IMR-90 (cell line): ENCODE measurements at regions of chr6 and their contacts with region 1.

Region 1: DNA sequence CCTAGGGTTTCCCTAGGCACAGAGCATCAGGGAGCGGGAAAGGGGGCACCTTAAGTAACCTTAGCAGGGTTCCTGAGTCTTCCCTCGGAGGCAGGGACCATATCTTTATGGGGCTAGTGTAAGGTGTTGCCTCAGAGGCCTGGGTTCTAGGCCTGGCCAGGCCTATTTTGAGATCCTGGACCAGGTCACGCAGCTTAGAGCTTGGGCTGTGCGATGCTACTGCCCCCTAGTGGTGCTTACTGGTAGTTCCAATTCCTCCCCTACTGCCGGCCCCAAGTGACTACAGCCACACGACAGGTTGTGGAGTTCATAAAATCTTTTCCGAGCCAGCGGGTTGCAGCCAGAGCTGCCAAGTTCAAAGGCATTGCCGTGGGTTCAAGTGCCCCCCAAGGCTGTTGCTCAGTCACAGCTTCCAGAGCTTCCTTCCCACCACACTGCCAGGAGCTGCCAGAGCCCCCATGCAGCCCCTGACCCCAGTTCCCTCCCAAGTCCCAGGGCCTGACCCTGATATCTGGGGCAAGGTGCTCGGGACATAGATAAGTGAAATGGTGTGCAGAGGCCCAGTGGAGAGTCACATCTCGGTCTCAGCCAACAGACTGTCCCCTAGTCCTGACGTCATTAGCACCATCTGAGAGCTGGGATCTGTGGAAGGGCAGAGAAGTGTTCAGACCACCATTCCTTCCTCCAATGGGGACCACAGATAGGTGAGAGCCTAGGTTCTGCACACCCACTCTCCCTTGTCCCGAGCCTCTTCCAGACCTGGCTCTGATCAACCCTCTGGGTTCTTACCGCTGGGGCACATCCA is 3.3 kb downstream of the LRRC73 start:
- DNase-seq: peak; percentile 78
- ATAC-seq: peak; percentile 58
- H3K4me3 ChIP-seq: no peak overlapping the region
- H3K27ac ChIP-seq: no peak overlapping the region
- H3K4me1 ChIP-seq: peaks cover 4% of the 10 kb centered on the region
- H3K27me3 ChIP-seq: no peaks in the 10 kb centered on the region
- CTCF ChIP-seq: peak; percentile 98
- POLR2A ChIP-seq: 0 out of 2 replicates have a peak, but pooled peaks have one; percentile 30
- RAD21 ChIP-seq: peak; percentile 94

Region 2: GRCh38 chr6:43150051-43150751 is 356.7 kb before region 1 on chr6:
- CTCF ChIA-PET with region 1: no interaction called
- POLR2A ChIA-PET with region 1: no interaction called
- dilution Hi-C with region 1: no loop called
- in situ Hi-C with region 1: no loop called
- intact Hi-C with region 1: no loop called
- DNase-seq: peak; percentile 16
- ATAC-seq: no peak
- H3K4me3 ChIP-seq: no peak overlapping the region
- H3K27ac ChIP-seq: no peak overlapping the region
- H3K4me1 ChIP-seq: peaks cover 1% of the 10 kb centered on the region; the same call in 1 of the 2 replicates
- H3K27me3 ChIP-seq: no peaks in the 10 kb centered on the region
- CTCF ChIP-seq: no peak
- POLR2A ChIP-seq: no peak
- RAD21 ChIP-seq: no peak

Region 3: DNA sequence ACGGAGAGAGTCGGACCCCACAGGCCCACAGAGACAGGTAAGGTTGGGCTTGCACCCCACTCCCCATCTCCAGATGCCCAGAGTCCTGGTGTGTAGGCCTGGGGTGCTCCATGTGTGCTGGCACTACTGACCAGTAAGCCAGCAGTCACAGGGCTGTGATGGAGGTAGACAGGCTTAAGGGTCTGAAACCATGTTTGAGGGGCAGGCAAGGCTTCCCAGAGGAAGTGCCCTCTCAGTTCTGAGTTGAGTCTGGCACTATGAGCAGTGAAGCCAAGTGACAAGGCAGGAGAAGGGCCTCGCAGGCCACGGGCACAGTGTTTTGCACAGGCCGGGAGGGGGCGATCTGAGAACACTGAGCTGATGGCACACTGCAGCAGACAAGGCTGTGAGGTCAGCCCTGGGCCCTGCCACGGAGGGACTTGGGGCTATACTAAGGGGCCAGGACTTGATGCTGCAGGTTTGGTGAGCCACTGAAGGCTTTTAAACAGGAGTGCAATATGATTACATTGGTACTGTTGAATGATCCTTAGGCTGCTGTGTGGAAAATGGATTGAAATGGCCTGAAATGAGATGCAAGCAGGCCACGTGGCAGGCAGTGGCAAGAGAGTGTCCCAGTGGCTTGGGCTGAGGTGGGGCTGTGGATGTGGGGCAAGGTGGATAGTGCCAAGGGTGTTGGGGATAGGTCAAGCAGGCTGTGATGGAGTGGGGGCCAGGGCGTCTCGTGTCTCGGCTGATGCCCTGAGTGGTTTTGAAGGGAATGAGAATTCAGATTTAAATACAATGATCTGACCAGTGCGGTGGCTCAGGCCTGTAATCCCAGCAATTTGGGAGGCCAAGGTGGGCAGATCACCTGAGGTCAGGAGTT is 243.3 kb before region 1 on chr6:
- CTCF ChIA-PET with region 1: no interaction called
- POLR2A ChIA-PET with region 1: no interaction called
- dilution Hi-C with region 1: no loop called
- in situ Hi-C with region 1: no loop called
- intact Hi-C with region 1: loop called (anchors 1 kb)
- DNase-seq: peak; percentile 62
- ATAC-seq: peak; percentile 99
- H3K4me3 ChIP-seq: no peak overlapping the region
- H3K27ac ChIP-seq: no peak overlapping the region
- H3K4me1 ChIP-seq: no peaks in the 10 kb centered on the region
- H3K27me3 ChIP-seq: peaks cover 35% of the 10 kb centered on the region
- CTCF ChIP-seq: peak; percentile 90
- POLR2A ChIP-seq: no peak
- RAD21 ChIP-seq: peak; percentile 94

Region 4: GRCh38 chr6:43386492-43386891 is 120.4 kb before region 1 on chr6:
- CTCF ChIA-PET with region 1: no interaction called
- POLR2A ChIA-PET with region 1: no interaction called
- dilution Hi-C with region 1: no loop called
- in situ Hi-C with region 1: no loop called
- intact Hi-C with region 1: loop called (anchors 1 kb)
- DNase-seq: peak; percentile 25
- ATAC-seq: peak; percentile 76
- H3K4me3 ChIP-seq: no peak overlapping the region
- H3K27ac ChIP-seq: no peak overlapping the region
- H3K4me1 ChIP-seq: peaks cover 2% of the 10 kb centered on the region
- H3K27me3 ChIP-seq: peaks cover 18% of the 10 kb centered on the region
- CTCF ChIP-seq: peak; percentile 60
- POLR2A ChIP-seq: no peak
- RAD21 ChIP-seq: peak; percentile 46

Region 5: GRCh38 chr6:43427406-43428111 is 79.3 kb before region 1 on chr6 and contains the start of gene ABCC10:
- CTCF ChIA-PET with region 1: no interaction called
- POLR2A ChIA-PET with region 1: no interaction called
- dilution Hi-C with region 1: no loop called
- in situ Hi-C with region 1: no loop called
- intact Hi-C with region 1: loop called (anchors 1 kb)
- DNase-seq: peak; percentile 95
- ATAC-seq: peak; percentile 97
- H3K4me3 ChIP-seq: peak within 1 kb of the TSS; percentile 75
- H3K27ac ChIP-seq: peak within 1 kb of the TSS; percentile 76
- H3K4me1 ChIP-seq: peaks cover 5% of the 10 kb centered on the region
- H3K27me3 ChIP-seq: no peaks in the 10 kb centered on the region; the same call in 1 of the 2 replicates
- CTCF ChIP-seq: peak; percentile 36; the same call in 1 of the 2 replicates
- POLR2A ChIP-seq: no peak; the same call in 1 of the 2 replicates
- RAD21 ChIP-seq: no peak
- total RNA-seq, gene ABCC10: 4.7 and 7.0 TPM in 2 replicates

Region 6: DNA sequence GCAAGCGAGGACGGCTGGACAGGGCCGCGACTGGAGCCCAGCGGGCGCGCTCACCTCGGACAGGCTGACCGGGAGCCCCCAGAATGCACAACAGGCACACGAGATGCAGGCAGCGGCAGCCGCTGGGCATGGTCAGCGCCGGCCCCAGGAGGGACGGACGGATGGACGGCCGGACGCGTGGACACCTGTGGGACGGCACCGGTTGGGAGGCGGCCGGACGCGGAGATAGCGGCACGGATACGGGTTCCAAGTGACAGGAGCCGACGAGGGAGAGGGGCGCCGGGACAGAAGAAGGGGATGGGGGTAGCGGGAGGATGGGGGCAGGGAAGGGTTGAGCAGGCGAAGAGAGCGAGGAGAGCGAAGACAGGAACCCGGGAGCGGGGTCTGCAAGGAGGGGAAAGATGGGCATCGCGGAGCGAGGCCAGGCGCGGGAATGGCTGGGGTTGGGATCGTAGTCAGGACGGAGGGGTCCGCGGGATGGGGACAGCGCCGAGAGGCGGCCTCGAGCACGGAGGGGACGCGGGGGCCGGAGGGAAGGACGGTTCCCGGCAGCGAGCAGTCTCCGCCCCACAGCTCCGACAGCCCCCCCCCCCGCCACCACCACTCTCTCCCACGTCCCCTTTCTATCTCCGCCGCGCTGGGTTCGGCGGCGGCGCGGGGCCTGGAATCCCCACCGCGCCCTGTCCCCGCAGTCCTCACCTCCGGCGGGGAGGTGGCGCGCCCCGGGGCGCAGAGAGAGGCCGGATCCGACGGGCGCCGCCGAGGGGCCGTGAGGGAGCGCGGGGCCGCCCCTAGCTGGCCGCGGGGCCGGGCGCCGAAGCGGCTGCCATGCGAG is 52.0 kb before region 1 on chr6:
- CTCF ChIA-PET with region 1: interaction called, 7 read pairs
- POLR2A ChIA-PET with region 1: no interaction called
- dilution Hi-C with region 1: no loop called
- in situ Hi-C with region 1: no loop called
- intact Hi-C with region 1: loop called (anchors 1 kb)
- DNase-seq: peak; percentile 81
- ATAC-seq: peak; percentile 98
- H3K4me3 ChIP-seq: peak overlapping the region; percentile 53
- H3K27ac ChIP-seq: no peak overlapping the region; the same call in 1 of the 2 replicates
- H3K4me1 ChIP-seq: peaks cover 2% of the 10 kb centered on the region; the same call in 1 of the 2 replicates
- H3K27me3 ChIP-seq: peaks cover 15% of the 10 kb centered on the region
- CTCF ChIP-seq: no peak
- POLR2A ChIP-seq: no peak
- RAD21 ChIP-seq: no peak